CD8-positive, alpha-beta T cell (primary cell): ENCODE measurements at regions of chr16 and their contacts with region 1.

Region 1: GRCh38 chr16:30657866-30658730 is at the start of gene FBRS:
- DNase-seq: peak; percentile 99 to 100 (median 100)
- ATAC-seq: peak; percentile 75
- H3K4me3 ChIP-seq: peak within 1 kb of the TSS; percentile 61 to 91
- H3K4me3 Mint-ChIP-seq: peak within 1 kb of the TSS; percentile 98
- H3K27ac ChIP-seq: peak within 1 kb of the TSS; percentile 97 to 99
- H3K27ac Mint-ChIP-seq: peak within 1 kb of the TSS; percentile 100
- H3K4me1 ChIP-seq: peaks cover 36% of the 10 kb centered on the region
- H3K4me1 Mint-ChIP-seq: peaks cover 39% of the 10 kb centered on the region
- H3K27me3 ChIP-seq: no peaks in the 10 kb centered on the region
- H3K27me3 Mint-ChIP-seq: no peaks in the 10 kb centered on the region
- CTCF ChIP-seq: peak; percentile 66
- total RNA-seq, gene FBRS: 222 to 224 TPM

Region 2: DNA sequence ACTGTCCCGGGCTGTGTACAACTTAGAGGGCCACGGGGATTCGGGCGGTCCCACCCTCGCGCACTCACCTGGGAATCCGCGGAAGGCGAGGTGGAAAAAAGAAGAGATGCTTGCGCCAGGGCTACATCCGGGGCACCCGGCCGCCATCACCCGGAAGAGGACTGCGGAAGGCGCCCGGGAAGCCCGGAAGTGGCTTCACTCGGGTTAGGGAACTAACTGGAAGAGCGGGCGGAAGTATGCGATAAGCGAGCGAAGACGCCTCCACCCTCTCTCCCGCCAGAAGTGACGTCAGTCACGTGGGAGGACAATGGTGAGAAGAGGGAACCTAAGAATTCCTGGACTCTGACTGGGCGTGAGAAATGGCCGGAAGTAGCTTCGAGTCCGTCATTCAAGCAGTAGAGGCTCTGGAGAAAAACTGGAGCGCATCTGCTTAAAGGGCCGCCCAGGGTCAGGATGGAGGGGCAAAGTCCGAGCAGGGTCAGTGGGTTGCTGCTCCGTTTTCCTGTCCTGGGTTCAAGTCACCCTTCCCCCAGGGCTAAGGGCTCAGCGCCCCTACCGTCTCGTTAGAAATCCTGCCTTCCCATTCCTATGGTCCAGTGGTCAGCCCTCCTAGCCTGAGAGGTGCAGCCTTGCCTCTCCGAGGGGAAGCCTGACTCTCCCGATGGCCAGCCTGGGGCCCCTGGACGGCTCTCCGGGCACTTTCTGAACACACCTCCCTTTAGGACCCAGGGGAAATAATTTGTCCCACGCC is 302.8 kb before region 1 on chr16 and contains the start of gene CD2BP2:
- CTCF ChIA-PET with region 1: no interaction called
- POLR2A ChIA-PET with region 1: no interaction called
- intact Hi-C with region 1: loop called in 1 of 2 experiments (anchors 1 kb)
- DNase-seq: peak; percentile 72 to 97 (median 86)
- ATAC-seq: peak; percentile 88
- H3K4me3 ChIP-seq: peak within 1 kb of the TSS; percentile 70 to 98
- H3K4me3 Mint-ChIP-seq: peak within 1 kb of the TSS; percentile 94
- H3K27ac ChIP-seq: peak within 1 kb of the TSS; percentile 63 to 98
- H3K27ac Mint-ChIP-seq: peak within 1 kb of the TSS; percentile 98
- H3K4me1 ChIP-seq: peaks cover 32% of the 10 kb centered on the region
- H3K4me1 Mint-ChIP-seq: peaks cover 27% of the 10 kb centered on the region
- H3K27me3 ChIP-seq: no peaks in the 10 kb centered on the region
- H3K27me3 Mint-ChIP-seq: no peaks in the 10 kb centered on the region
- CTCF ChIP-seq: no peak
- total RNA-seq, gene CD2BP2: 35.4 to 35.9 TPM

Region 3: DNA sequence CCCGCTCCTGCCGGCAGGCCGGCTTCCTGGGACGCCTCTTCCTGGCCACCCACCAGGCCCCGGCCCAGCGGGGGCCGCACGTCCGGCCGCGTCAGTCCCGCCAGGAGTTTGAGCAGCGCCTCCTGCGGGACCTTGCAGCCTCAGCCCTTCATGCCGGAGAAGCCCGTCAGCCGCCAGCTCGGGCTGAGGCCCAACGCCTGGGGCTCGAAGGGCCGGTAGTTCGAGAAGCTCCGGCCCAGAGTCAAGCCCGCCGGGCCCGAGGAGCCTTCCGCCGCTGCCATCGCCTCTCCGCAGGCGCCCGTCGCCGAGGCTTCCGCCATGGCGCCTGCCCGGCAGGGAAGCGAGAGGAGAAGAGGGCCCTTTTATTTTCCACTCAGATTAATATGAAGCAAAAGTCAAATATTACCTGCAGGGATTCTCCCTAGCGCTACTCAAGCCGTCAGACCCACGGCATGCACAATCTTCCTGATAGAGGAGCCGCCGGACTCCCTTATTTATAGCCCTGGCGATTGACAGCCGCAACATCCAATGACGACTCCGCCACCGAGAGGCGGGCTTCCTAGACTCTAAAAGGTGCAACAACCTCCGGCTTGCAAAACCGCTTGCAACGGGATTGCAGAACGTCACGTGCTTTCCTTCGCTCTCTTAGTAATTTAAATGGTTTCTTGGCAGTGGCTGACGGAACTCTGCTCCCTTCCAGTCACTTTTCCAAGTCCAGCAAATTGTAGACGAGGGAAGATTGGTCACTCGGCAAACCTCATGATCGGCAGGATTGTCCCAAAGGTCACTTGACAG is 212.5 kb before region 1 on chr16 and contains the start of gene SEPHS2:
- CTCF ChIA-PET with region 1: no interaction called
- POLR2A ChIA-PET with region 1: no interaction called
- intact Hi-C with region 1: loop called in 1 of 2 experiments (anchors 5 kb)
- DNase-seq: peak; percentile 93 to 98 (median 94)
- ATAC-seq: peak; percentile 95
- H3K4me3 ChIP-seq: peak within 1 kb of the TSS; percentile 69 to 73
- H3K4me3 Mint-ChIP-seq: peak within 1 kb of the TSS; percentile 92
- H3K27ac ChIP-seq: peak within 1 kb of the TSS; percentile 76 to 80
- H3K27ac Mint-ChIP-seq: peak within 1 kb of the TSS; percentile 95
- H3K4me1 ChIP-seq: peaks cover 32% of the 10 kb centered on the region
- H3K4me1 Mint-ChIP-seq: peaks cover 42% of the 10 kb centered on the region
- H3K27me3 ChIP-seq: no peaks in the 10 kb centered on the region
- H3K27me3 Mint-ChIP-seq: no peaks in the 10 kb centered on the region
- CTCF ChIP-seq: peak; percentile 31
- total RNA-seq, gene SEPHS2: 22.6 to 24.1 TPM

Region 4: GRCh38 chr16:30585400-30586189 is 72.5 kb before region 1 on chr16 and contains the start of gene ZNF785:
- CTCF ChIA-PET with region 1: no interaction called
- POLR2A ChIA-PET with region 1: interaction called, 3 read pairs
- intact Hi-C with region 1: loop called in 1 of 2 experiments (anchors 1 kb)
- DNase-seq: peak; percentile 81 to 98 (median 91)
- ATAC-seq: peak; percentile 99
- H3K4me3 ChIP-seq: peak within 1 kb of the TSS; percentile 68 to 78
- H3K4me3 Mint-ChIP-seq: peak within 1 kb of the TSS; percentile 94
- H3K27ac ChIP-seq: peak within 1 kb of the TSS; percentile 44 to 61
- H3K27ac Mint-ChIP-seq: peak within 1 kb of the TSS; percentile 91
- H3K4me1 ChIP-seq: peaks cover 12% of the 10 kb centered on the region
- H3K4me1 Mint-ChIP-seq: peaks cover 27% of the 10 kb centered on the region
- H3K27me3 ChIP-seq: no peaks in the 10 kb centered on the region
- H3K27me3 Mint-ChIP-seq: no peaks in the 10 kb centered on the region
- CTCF ChIP-seq: no peak
- total RNA-seq, gene ZNF785: 5.0 to 6.9 TPM

Region 5: DNA sequence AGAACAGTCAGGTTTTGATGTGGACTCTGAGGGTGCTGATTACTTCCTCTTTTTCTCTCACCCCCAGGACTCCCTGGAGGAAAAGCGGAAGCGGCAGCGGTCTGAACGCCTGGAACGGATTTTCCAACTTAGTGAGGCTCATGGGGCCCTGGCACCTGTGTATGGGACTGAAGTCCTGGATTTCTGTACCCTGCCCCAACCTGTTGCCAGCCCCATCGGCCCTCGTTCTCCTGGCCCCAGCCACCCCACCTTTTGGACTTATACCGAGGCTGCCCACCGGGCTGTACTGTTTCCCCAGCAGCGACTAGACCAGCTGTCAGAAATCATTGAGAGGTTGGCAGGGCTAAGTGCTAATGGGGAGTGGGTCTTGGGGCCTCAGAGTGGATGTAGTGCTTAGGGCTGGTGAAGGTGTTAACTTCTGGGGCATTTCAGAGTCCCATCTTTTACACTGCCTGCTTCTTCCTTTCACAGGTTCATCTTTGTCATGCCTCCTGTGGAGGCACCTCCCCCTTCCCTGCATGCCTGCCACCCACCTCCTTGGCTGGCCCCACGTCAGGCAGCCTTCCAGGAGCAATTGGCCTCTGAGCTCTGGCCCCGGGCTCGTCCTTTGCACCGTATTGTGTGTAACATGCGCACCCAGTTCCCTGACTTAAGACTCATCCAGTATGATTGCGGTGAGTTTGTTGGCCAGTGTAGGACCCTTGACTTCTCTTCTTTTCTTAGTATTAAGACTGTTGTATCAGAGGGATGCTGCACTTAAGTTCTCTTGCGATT is 71.0 kb after region 1 on chr16:
- CTCF ChIA-PET with region 1: no interaction called
- POLR2A ChIA-PET with region 1: no interaction called
- intact Hi-C with region 1: no loop called
- DNase-seq: no peak
- ATAC-seq: no peak
- H3K4me3 ChIP-seq: no peak overlapping the region
- H3K4me3 Mint-ChIP-seq: no peak overlapping the region
- H3K27ac ChIP-seq: no peak overlapping the region
- H3K27ac Mint-ChIP-seq: no peak overlapping the region
- H3K4me1 ChIP-seq: no peaks in the 10 kb centered on the region
- H3K4me1 Mint-ChIP-seq: peaks cover 5% of the 10 kb centered on the region
- H3K27me3 ChIP-seq: no peaks in the 10 kb centered on the region
- H3K27me3 Mint-ChIP-seq: no peaks in the 10 kb centered on the region
- CTCF ChIP-seq: no peak

Region 6: DNA sequence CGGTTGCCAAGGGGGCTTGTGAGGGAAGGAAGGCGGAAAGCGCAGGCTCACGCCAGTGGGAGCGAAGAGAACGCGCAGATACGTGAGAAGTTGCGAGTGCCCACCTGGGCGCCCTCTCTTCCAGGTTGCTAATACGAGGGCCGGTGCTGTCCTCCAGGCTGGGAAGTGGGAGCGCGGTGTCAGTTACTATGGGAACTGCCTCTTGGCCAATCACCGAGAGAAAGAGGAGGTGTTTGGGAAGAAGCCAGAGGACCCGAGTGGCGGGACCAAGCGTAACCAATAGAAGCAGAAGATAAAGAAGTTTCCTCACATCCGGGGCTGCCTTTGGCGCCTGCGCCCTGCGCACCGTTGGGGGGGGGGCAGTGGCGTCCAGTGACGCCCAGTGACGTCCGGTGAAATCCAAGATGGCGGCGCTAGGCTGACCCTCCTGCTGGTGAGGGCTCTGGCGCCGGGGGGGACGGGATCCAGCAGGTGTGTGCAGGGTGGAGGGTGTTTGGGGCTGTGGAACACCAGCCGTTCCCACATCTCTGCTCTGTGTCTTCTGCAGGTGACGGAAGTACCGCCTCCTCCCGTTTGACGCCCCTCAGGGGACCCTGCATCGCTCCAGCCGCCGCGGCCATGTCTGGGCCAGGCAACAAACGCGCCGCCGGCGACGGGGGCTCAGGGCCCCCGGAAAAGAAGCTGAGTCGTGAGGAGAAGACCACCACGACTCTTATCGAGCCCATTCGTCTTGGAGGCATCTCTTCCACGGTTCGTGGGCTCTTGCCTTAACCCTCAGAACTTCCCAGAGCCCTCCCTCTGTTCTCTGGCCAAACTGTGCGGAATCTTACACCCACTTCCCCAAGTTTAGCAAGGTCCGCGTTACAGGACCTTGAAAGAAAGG is 104.1 kb after region 1 on chr16 and contains the starts of genes CFAP119 and RNF40:
- CTCF ChIA-PET with region 1: no interaction called
- POLR2A ChIA-PET with region 1: interaction called, 4 read pairs
- intact Hi-C with region 1: loop called (anchors 1 to 2 kb)
- DNase-seq: peak; percentile 67 to 96 (median 90)
- ATAC-seq: peak; percentile 91
- H3K4me3 ChIP-seq: peak within 1 kb of the TSS; percentile 59 to 95
- H3K4me3 Mint-ChIP-seq: peak within 1 kb of the TSS; percentile 96
- H3K27ac ChIP-seq: peak within 1 kb of the TSS; percentile 74 to 93
- H3K27ac Mint-ChIP-seq: peak within 1 kb of the TSS; percentile 92
- H3K4me1 ChIP-seq: peaks cover 24% of the 10 kb centered on the region
- H3K4me1 Mint-ChIP-seq: peaks cover 26% of the 10 kb centered on the region
- H3K27me3 ChIP-seq: no peaks in the 10 kb centered on the region
- H3K27me3 Mint-ChIP-seq: no peaks in the 10 kb centered on the region
- CTCF ChIP-seq: no peak
- total RNA-seq, gene CFAP119: 2.7 to 3.6 TPM
- total RNA-seq, gene RNF40: 98.7 to 101 TPM

Region 7: DNA sequence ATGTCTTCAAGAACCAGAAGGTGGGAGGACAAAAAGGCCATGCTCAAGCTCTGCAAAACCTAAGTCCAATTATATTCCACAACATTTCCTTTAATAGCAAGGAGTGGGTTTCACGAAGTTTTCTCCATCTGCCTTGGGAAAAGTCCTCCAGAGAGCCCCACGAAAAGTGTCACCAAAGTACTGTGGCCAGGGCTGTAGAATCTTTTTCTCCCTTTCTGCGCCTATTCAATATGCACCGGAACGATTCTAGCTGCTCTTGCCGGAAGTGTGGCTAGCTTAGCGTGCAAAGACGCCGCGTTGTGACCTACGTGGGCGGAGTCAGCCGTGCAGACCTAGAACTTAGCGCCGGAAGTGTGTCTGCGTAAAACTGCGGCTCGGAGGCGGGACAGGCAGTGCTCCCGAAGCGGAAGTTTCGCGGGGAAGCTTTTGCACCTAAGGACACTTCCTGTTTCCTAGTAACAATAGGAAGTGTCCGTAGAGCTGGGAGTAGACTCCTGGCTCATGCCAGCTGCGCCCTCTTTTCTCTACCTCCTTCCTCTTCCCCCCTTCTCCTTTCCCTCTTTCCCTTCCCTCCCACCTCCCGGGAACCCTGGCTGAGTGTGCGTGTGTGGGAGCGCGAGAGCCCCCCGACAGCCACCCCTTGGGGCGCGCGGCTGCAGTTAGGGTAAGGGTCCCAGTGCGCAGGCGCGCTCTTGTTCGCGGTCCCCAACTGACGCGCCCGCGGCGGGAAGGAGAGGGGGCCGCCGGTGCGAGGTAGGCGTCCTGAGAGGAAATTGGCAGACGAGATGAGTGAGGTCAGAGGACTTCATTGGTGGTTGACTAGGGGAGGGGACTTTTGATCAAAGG is 416.1 kb after region 1 on chr16 and contains the starts of genes ZNF646 and ZNF668:
- CTCF ChIA-PET with region 1: no interaction called
- POLR2A ChIA-PET with region 1: interaction called, 3 read pairs
- intact Hi-C with region 1: loop called (anchors 5 to 10 kb)
- DNase-seq: peak; percentile 94 to 100 (median 97)
- ATAC-seq: peak; percentile 82
- H3K4me3 ChIP-seq: peak within 1 kb of the TSS; percentile 67 to 83
- H3K4me3 Mint-ChIP-seq: peak within 1 kb of the TSS; percentile 96
- H3K27ac ChIP-seq: peak within 1 kb of the TSS; percentile 88 to 95
- H3K27ac Mint-ChIP-seq: peak within 1 kb of the TSS; percentile 97
- H3K4me1 ChIP-seq: peaks cover 27% of the 10 kb centered on the region
- H3K4me1 Mint-ChIP-seq: peaks cover 40% of the 10 kb centered on the region
- H3K27me3 ChIP-seq: no peaks in the 10 kb centered on the region
- H3K27me3 Mint-ChIP-seq: no peaks in the 10 kb centered on the region
- CTCF ChIP-seq: no peak
- total RNA-seq, gene ZNF646: 16.6 to 18.7 TPM
- total RNA-seq, gene ZNF668: 10.1 to 11.1 TPM